GM18951 (cell line): ENCODE measurements at regions of chr5 and their contacts with region 1.

Region 1: GRCh38 chr5:109448838-109449237 is 39.1 kb upstream of the PJA2 start:
- POLR2A ChIP-seq: no peak

Region 2: GRCh38 chr5:108681079-108681921 is 767.5 kb before region 1 on chr5:
- in situ Hi-C with region 1: loop called (anchors 25 kb)
- POLR2A ChIP-seq: no peak

Region 3: DNA sequence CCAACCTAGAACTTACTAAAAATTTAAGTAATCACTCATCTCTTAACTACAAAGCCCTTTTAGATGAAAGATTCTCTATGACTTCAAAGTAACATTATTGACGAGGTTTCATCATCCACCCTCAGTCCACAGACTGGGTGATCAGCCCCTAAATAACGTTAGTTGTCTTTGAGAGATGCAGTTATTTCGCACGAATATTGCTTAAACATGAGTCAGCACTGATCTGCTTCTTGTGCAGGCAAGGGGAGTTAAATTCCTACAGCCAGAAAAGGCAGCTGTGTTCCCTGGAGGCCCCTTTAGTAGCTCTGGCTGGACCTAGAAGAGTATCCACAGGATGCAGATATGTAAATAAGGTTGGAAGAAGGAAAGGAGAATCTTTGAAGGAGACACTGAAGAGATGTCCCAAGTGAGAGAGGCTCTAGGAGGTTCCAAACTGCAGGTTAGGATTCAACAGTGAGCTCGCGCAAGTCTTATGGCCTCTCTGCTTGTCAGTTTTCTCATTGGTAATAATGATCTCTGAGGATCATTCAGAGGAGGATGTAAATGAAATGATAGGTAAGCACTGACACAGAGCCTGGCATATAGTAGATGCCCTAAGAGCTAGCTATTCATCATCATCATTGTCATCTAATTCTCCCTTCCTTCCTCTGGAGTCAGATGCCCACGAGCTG is 118.7 kb after region 1 on chr5:
- in situ Hi-C with region 1: no loop called
- POLR2A ChIP-seq: no peak